HCT116 (cell line): ENCODE measurements at regions of chr11 and their contacts with region 1.

Region 1: GRCh38 chr11:108117746-108118371 is 3.5 kb upstream of the ACAT1 start:
- DNase-seq: peak; percentile 52
- ATAC-seq: no peak
- H3K4me3 ChIP-seq: no peak overlapping the region
- H3K27ac ChIP-seq: no peak overlapping the region
- H3K4me1 ChIP-seq: peaks cover 5 to 28% of the 10 kb centered on the region in 2 experiments; a peak in 3 of 4 replicates
- H3K27me3 ChIP-seq: no peaks in the 10 kb centered on the region
- CTCF ChIP-seq: peak; percentile 61 to 75 (median 66); a peak in 5 of 6 replicates
- POLR2A ChIP-seq: no peak
- RAD21 ChIP-seq: peak; percentile 85

Region 2: GRCh38 chr11:107898270-107898669 is 219.6 kb before region 1 on chr11:
- CTCF ChIA-PET with region 1: no interaction called
- POLR2A ChIA-PET with region 1: no interaction called
- RAD21 ChIA-PET with region 1: no interaction called
- intact Hi-C with region 1: no loop called
- DNase-seq: peak; percentile 36
- ATAC-seq: peak; percentile 94
- H3K4me3 ChIP-seq: no peak overlapping the region
- H3K27ac ChIP-seq: no peak overlapping the region
- H3K4me1 ChIP-seq: no peaks in the 10 kb centered on the region
- H3K27me3 ChIP-seq: no peaks in the 10 kb centered on the region
- CTCF ChIP-seq: peak; percentile 62 to 77 (median 71); a peak in 5 of 6 replicates
- POLR2A ChIP-seq: no peak
- RAD21 ChIP-seq: peak; percentile 89

Region 3: GRCh38 chr11:108222686-108223448 is 105.0 kb after region 1 on chr11 and contains the start of gene ATM:
- CTCF ChIA-PET with region 1: interaction called, 14 read pairs
- POLR2A ChIA-PET with region 1: no interaction called
- RAD21 ChIA-PET with region 1: no interaction called
- intact Hi-C with region 1: loop called (anchors 2 kb)
- DNase-seq: peak; percentile 98
- ATAC-seq: peak; percentile 93
- H3K4me3 ChIP-seq: peak within 1 kb of the TSS; percentile 86 to 90
- H3K27ac ChIP-seq: peak within 1 kb of the TSS; percentile 80
- H3K4me1 ChIP-seq: peaks cover 6 to 22% of the 10 kb centered on the region in 2 experiments; a peak in 3 of 4 replicates
- H3K27me3 ChIP-seq: no peaks in the 10 kb centered on the region
- CTCF ChIP-seq: peak; percentile 55 to 82 (median 77); a peak in 5 of 6 replicates
- POLR2A ChIP-seq: peak; percentile 62
- RAD21 ChIP-seq: peak; percentile 83
- total RNA-seq, gene ATM: 32.2 TPM

Region 4: DNA sequence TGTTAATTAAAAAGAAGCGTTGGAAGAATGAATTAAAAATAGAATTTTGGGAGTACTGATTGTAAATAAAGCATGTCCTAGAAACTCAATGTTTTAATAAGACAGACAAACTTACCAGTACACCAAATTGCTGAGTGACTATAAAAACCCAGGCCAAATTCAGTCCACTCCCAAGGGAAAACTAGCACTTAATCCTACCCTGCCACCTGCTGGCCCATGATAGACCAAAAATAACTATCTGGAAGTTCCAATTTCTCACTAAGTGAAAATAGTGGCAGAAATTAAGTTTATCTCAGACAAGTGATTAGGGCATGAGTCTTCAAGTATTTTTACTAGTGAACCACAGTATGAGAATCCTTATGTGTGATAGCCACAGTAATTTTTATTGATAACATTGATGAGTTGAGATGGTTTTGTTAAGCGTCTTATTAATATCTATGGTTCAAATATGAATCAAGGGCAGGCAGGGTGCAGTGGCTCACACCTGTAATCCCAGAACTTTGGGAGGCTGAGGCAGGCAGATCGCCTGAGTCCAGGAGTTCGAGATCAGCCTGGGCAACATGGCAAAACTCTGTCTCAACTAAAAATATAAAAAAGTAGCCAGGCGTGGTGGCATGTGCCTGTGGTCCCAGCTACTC is 537.3 kb after region 1 on chr11:
- CTCF ChIA-PET with region 1: interaction called, 23 read pairs
- POLR2A ChIA-PET with region 1: interaction called, 3 read pairs
- RAD21 ChIA-PET with region 1: interaction called in 1 of 2 experiments, 3 read pairs
- intact Hi-C with region 1: loop called (anchors 2 kb)
- DNase-seq: peak; percentile 54
- ATAC-seq: peak; percentile 91
- H3K4me3 ChIP-seq: no peak overlapping the region
- H3K27ac ChIP-seq: no peak overlapping the region
- H3K4me1 ChIP-seq: no peaks in the 10 kb centered on the region
- H3K27me3 ChIP-seq: no peaks in the 10 kb centered on the region
- CTCF ChIP-seq: peak; percentile 64 to 82 (median 80)
- POLR2A ChIP-seq: no peak
- RAD21 ChIP-seq: peak; percentile 94

Region 5: GRCh38 chr11:108664730-108665525 is 547.1 kb after region 1 on chr11 and contains the start of gene DDX10:
- CTCF ChIA-PET with region 1: interaction called, 12 read pairs
- POLR2A ChIA-PET with region 1: no interaction called
- RAD21 ChIA-PET with region 1: no interaction called
- intact Hi-C with region 1: no loop called
- DNase-seq: peak; percentile 97
- ATAC-seq: peak; percentile 97
- H3K4me3 ChIP-seq: peak within 1 kb of the TSS; percentile 73 to 82
- H3K27ac ChIP-seq: peak within 1 kb of the TSS; percentile 25; the same call in 1 of the 2 replicates
- H3K4me1 ChIP-seq: peaks cover 7 to 17% of the 10 kb centered on the region in 2 experiments; a peak in 3 of 4 replicates
- H3K27me3 ChIP-seq: no peaks in the 10 kb centered on the region
- CTCF ChIP-seq: 0 out of 6 replicates have a peak, but pooled peaks of 1 of the 3 experiments have one; percentile 6
- POLR2A ChIP-seq: peak; percentile 29
- RAD21 ChIP-seq: no peak
- total RNA-seq, gene DDX10: 66.5 TPM